A673 (cell line): ENCODE measurements at regions of chr6 and their contacts with region 1.

Region 1: GRCh38 chr6:24006254-24006653 is 119.8 kb upstream of the NRSN1 start:
- DNase-seq: no peak
- H3K4me3 ChIP-seq: no peak overlapping the region
- H3K27ac ChIP-seq: no peak overlapping the region
- H3K4me1 ChIP-seq: no peaks in the 10 kb centered on the region
- H3K27me3 ChIP-seq: no peaks in the 10 kb centered on the region
- CTCF ChIP-seq: no peak

Region 2: GRCh38 chr6:24019830-24020229 is 13.6 kb after region 1 on chr6:
- CTCF ChIA-PET with region 1: no interaction called
- POLR2A ChIA-PET with region 1: no interaction called
- intact Hi-C with region 1: no loop called
- DNase-seq: peak; percentile 43
- H3K4me3 ChIP-seq: no peak overlapping the region
- H3K27ac ChIP-seq: no peak overlapping the region
- H3K4me1 ChIP-seq: no peaks in the 10 kb centered on the region
- H3K27me3 ChIP-seq: peaks cover 21% of the 10 kb centered on the region
- CTCF ChIP-seq: no peak

Region 3: GRCh38 chr6:24440897-24441598 is 434.8 kb after region 1 on chr6:
- CTCF ChIA-PET with region 1: no interaction called
- POLR2A ChIA-PET with region 1: interaction called, 16 read pairs
- intact Hi-C with region 1: no loop called
- DNase-seq: no peak
- H3K4me3 ChIP-seq: no peak overlapping the region
- H3K27ac ChIP-seq: no peak overlapping the region
- H3K4me1 ChIP-seq: no peaks in the 10 kb centered on the region
- H3K27me3 ChIP-seq: no peaks in the 10 kb centered on the region
- CTCF ChIP-seq: no peak